Left cardiac atrium (tissue), 4 donors: ENCODE measurements at regions of chr6 and their contacts with region 1.

Region 1: GRCh38 chr6:73732845-73733675 is 37.1 kb downstream of the CD109 start:
- DNase-seq: peak; percentile 57
- ATAC-seq: peak; percentile 81 to 87

Region 2: GRCh38 chr6:72894091-72894490 is 839.0 kb before region 1 on chr6:
- intact Hi-C with region 1: no loop called
- DNase-seq: no peak
- ATAC-seq: no peak

Region 3: DNA sequence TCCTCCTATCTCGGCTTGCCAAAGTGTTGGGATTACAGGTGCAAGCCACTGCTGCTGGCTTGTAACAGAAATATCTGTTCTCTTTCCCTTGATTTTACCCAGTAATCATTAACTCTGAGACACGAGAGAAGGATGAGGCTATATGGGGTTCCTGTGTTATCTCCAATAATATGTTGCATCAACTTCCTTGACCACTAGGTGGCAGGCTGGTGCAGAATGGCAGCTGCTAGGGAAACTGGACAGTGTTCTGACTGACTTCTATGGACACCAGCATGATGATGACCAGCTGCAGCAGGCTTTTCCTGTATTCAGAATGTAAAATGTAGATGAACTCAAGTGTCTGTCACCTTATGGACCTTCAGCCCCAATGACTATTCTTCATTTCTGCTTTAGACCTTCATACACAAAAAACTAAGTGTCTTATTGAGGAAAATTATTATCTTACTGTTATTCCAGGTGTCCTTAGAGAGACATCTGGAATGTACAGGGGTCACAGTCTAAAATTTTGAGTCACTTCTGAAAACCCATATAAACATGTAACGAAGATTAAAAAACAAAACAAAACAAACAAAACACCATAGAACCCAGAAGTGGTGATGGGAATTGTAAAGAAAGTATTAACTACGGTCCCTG is 57.5 kb before region 1 on chr6:
- intact Hi-C with region 1: loop called (anchors 1 to 5 kb)
- DNase-seq: peak; percentile 76
- ATAC-seq: peak; percentile 82 to 86

Region 4: GRCh38 chr6:73932866-73933265 is 199.8 kb after region 1 on chr6:
- intact Hi-C with region 1: no loop called
- DNase-seq: no peak
- ATAC-seq: no peak